Heart right ventricle (tissue), 16 donors: ENCODE measurements at regions of chr7 and their contacts with region 1.

Region 1: DNA sequence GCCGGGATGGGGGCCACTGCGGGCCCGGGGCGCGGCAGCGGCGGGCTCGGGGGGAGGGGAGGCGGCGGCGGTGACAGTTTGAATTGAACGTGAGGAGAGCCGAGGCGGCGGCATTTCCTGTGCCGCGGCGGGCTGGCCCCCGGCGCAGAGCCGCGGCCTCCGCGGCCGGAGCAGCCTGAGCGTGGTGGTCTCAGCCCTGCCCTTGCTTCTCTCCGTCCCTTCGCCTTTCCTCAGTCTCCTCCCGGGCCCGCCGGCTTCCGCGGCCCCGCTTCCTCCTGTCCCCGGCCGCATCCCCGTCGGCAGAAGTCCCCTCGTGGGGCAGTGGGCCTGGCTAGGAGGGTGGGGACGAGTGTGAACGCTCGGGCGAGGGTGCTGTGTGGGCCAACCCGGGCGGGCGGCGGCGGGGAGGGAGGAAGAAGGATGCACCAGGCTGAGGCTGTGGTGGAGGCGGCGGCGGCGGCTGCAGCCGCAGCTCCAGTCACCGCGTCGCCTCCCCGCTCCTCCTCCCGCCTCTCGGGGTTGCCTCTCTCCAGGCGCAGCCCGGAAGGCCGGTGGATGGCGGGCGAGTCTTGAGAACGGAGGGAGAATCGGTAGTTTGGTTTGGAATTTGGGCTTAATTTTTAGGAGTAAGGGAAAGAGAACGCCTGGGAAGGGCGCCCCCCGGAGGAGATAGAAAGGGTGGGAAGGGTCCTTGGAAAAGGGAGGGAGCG is 690 bp downstream of the SEPTIN7 start:
- DNase-seq: peak; percentile 70 to 77
- ATAC-seq: peak; percentile 23 to 72 (median 46)
- H3K4me3 ChIP-seq: peak overlapping the region; percentile 71 to 99 (median 88)
- H3K27ac ChIP-seq: peak overlapping the region; percentile 87 to 98 (median 97)
- H3K4me1 ChIP-seq: peaks cover 0 to 60% (median 45%) of the 10 kb centered on the region in 9 donors
- H3K27me3 ChIP-seq: no peaks in the 10 kb centered on the region
- CTCF ChIP-seq: peak; percentile 16 to 79 (median 64)

Region 2: GRCh38 chr7:35701287-35701900 is 100.2 kb before region 1 on chr7:
- intact Hi-C with region 1: loop called in 1 of 10 experiments (anchors 10 kb)
- DNase-seq: no peak
- ATAC-seq: no peak
- H3K4me3 ChIP-seq: no peak overlapping the region
- H3K27ac ChIP-seq: no peak overlapping the region
- H3K4me1 ChIP-seq: peaks cover 0 to 16% (median 0%) of the 10 kb centered on the region in 9 donors
- H3K27me3 ChIP-seq: no peaks in the 10 kb centered on the region
- CTCF ChIP-seq: no peak

Region 3: DNA sequence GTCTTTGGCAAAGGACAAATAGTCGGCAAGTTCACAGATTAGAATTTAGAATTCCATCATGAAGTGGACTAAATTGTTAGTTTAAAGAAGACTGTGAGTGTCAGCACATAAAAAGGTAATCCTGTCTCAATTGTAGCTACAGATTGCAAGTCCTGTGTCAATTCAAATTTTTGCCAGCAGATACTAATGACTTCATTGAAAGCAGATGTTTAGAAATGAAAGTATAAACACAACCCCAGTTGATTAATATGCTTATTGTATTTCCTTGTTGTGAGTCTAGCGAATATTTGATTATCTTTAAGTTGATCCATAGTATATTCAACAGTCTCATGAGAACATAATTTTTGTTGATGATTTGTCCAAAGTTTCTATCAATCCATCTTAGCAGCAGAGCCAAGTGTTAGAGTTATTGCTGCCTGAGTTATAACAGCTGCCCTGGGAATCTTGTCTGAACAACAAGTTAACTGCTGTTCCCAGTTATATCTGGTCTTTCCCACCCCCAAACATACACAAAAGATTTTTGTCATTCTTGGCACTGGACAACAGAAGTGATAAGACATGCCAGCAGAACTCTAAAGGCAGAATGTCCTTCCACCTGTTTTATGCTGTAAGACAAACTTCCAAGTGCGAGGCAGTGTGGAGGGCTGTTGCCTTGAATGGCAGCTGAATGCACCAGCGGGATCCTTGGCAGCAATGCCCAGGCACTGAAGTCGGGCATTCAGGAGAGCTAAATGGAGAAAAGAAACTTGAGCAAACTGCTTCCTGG is 85.3 kb before region 1 on chr7:
- intact Hi-C with region 1: loop called in 7 of 10 experiments (anchors 5 to 10 kb)
- DNase-seq: peak in 1 of 2 donors; percentile 32
- ATAC-seq: peak in 7 of 8 donors; percentile 59 to 76 (median 71)
- H3K4me3 ChIP-seq: peak overlapping the region in 9 of 10 donors; percentile 6 to 46 (median 41)
- H3K27ac ChIP-seq: peak overlapping the region; percentile 44 to 84 (median 71)
- H3K4me1 ChIP-seq: peaks cover 0 to 45% (median 13%) of the 10 kb centered on the region in 9 donors
- H3K27me3 ChIP-seq: no peaks in the 10 kb centered on the region
- CTCF ChIP-seq: no peak

Region 4: DNA sequence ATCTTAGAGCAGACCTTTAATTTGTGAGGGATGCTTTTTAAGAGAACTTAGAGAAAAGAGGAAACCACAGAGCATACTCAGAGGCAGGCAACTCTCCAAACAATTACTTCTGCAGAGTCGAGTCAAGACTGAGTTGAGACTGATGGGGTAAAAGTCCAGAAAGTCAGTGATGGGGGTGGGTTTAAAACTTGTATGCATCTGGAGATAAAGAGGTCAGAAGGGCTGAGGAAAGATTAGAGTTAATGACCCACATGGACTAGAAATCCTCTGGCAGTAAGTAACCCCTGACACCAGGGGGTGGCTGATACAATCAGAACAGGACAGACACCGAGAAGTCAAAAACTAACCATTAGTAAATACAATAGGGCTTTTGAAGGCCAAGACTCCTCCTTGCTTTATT is 43.1 kb before region 1 on chr7:
- intact Hi-C with region 1: loop called in 2 of 10 experiments (anchors 5 kb)
- DNase-seq: no peak
- ATAC-seq: no peak
- H3K4me3 ChIP-seq: no peak overlapping the region
- H3K27ac ChIP-seq: peak overlapping the region in 1 of 10 donors; percentile 16
- H3K4me1 ChIP-seq: peaks cover 3 to 71% (median 46%) of the 10 kb centered on the region in 9 donors
- H3K27me3 ChIP-seq: no peaks in the 10 kb centered on the region
- CTCF ChIP-seq: peak in 1 of 9 donors; percentile 9

Region 5: GRCh38 chr7:35781200-35781701 is 20.3 kb before region 1 on chr7:
- intact Hi-C with region 1: no loop called
- DNase-seq: no peak
- ATAC-seq: no peak
- H3K4me3 ChIP-seq: no peak overlapping the region
- H3K27ac ChIP-seq: no peak overlapping the region
- H3K4me1 ChIP-seq: peaks cover 0 to 8% (median 0%) of the 10 kb centered on the region in 9 donors
- H3K27me3 ChIP-seq: no peaks in the 10 kb centered on the region
- CTCF ChIP-seq: no peak

Region 6: GRCh38 chr7:35869810-35870209 is 68.3 kb after region 1 on chr7:
- intact Hi-C with region 1: loop called in 2 of 10 experiments (anchors 10 kb)
- DNase-seq: peak in 1 of 2 donors; percentile 30
- ATAC-seq: peak in 6 of 8 donors; percentile 42 to 82 (median 62)
- H3K4me3 ChIP-seq: no peak overlapping the region
- H3K27ac ChIP-seq: peak overlapping the region in 5 of 10 donors; percentile 25 to 52 (median 40)
- H3K4me1 ChIP-seq: peaks cover 0 to 61% (median 28%) of the 10 kb centered on the region in 9 donors
- H3K27me3 ChIP-seq: no peaks in the 10 kb centered on the region
- CTCF ChIP-seq: no peak